ENCODE measurements at regions of chr11 and their contacts with region 1.

Region 1: GRCh38 chr11:70755410-70756161 is 357.3 kb downstream of the CTTN start:
- DNase-seq: peak; percentile 72
- H3K4me3 Mint-ChIP-seq: no peak overlapping the region
- H3K27ac Mint-ChIP-seq: no peak overlapping the region
- H3K4me1 Mint-ChIP-seq: no peaks in the 10 kb centered on the region
- H3K27me3 Mint-ChIP-seq: peaks cover 10% of the 10 kb centered on the region

Region 2: DNA sequence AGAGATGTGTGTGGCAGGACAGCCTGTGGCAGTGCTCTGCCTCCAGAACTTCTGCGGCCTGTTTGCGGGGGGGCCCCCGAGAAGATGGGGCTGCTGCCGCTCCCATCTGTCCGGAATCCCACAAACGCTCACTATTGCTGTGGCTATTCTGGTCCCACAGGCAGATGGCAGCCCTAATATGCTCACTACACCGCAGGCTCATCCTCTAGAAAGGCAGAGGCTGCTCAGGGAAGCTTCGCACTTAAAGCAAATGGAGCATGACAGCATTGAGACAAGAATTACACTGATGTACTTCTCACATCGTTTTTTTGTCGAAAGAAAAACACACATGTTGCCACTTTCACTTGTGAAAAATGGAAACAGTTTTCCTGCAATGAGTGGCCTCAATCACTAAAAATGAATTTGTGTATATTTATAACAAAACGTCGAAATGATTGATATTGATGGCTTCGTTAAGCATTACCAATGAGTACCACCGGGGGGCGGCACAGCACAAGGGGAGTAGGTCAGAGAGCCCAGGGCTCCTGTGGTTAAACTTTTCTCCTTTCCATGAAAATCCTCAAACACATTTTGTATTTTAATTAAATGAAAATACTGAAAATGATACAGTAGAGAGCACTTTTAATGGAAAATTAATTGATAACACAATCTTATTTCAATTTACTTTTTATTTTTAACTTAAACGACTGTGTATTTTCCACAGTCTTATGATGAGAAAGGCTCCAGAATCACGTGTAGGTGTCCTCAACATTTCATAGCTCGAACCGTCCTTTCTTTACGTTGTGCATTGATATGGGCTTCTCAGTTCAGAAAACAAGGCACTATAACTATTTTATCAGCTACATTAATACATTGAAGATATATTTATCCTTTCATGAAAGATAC is 288.1 kb before region 1 on chr11:
- CTCF ChIA-PET with region 1: interaction called, 5 read pairs
- POLR2A ChIA-PET with region 1: no interaction called
- intact Hi-C with region 1: loop called (anchors 1 kb)
- DNase-seq: peak; percentile 66
- H3K4me3 Mint-ChIP-seq: no peak overlapping the region
- H3K27ac Mint-ChIP-seq: no peak overlapping the region
- H3K4me1 Mint-ChIP-seq: no peaks in the 10 kb centered on the region
- H3K27me3 Mint-ChIP-seq: peaks cover 11% of the 10 kb centered on the region